ENCODE measurements at regions of chr12 and their contacts with region 1.

Region 1: GRCh38 chr12:110426406-110426805 is 22.9 kb upstream of the ANAPC7 start:
- DNase-seq: no peak
- H3K4me3 ChIP-seq: no peak overlapping the region
- H3K27ac ChIP-seq: peak overlapping the region in 1 of 4 donors; percentile 0
- H3K4me1 ChIP-seq: peaks cover 0 to 8% (median 2%) of the 10 kb centered on the region in 4 donors
- H3K27me3 ChIP-seq: no peaks in the 10 kb centered on the region
- CTCF ChIP-seq: no peak
- EP300 ChIP-seq: no peak
- POLR2A ChIP-seq: no peak

Region 2: DNA sequence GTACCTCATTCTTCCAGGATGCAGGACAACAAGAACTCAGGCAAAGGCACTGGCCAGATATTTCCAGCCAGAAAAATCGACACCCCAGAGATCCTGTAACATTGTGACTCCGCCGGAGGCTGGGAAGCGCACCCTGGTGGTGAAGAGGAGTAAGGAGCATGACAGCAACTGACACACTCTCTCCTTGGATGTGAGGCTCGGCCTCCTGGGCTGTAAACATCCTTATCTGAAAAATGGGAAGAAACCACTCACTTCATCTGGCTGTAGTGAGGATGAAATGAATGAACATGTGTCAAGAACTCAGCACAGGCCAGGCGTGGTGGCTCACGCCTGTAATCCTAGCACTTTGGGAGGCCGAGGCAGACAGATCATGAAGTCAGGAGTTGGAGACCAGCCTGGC is 498.8 kb before region 1 on chr12:
- in situ Hi-C with region 1: no loop called
- intact Hi-C with region 1: no loop called
- DNase-seq: peak; percentile 47
- H3K4me3 ChIP-seq: no peak overlapping the region
- H3K27ac ChIP-seq: no peak overlapping the region
- H3K4me1 ChIP-seq: peaks cover 0 to 9% (median 3%) of the 10 kb centered on the region in 4 donors
- H3K27me3 ChIP-seq: no peaks in the 10 kb centered on the region
- CTCF ChIP-seq: peak; percentile 46 to 66 (median 63)
- EP300 ChIP-seq: no peak
- POLR2A ChIP-seq: no peak

Region 3: GRCh38 chr12:110093631-110094311 is 332.6 kb before region 1 on chr12:
- in situ Hi-C with region 1: loop called in 1 of 4 experiments (anchors 10 kb)
- intact Hi-C with region 1: no loop called
- DNase-seq: no peak
- H3K4me3 ChIP-seq: no peak overlapping the region
- H3K27ac ChIP-seq: no peak overlapping the region
- H3K4me1 ChIP-seq: no peaks in the 10 kb centered on the region
- H3K27me3 ChIP-seq: no peaks in the 10 kb centered on the region
- CTCF ChIP-seq: no peak
- EP300 ChIP-seq: no peak
- POLR2A ChIP-seq: no peak

Region 4: GRCh38 chr12:110501752-110502738 is 75.6 kb after region 1 on chr12 and contains the starts of genes RAD9B and VPS29:
- in situ Hi-C with region 1: no loop called
- intact Hi-C with region 1: no loop called
- DNase-seq: peak; percentile 99
- H3K4me3 ChIP-seq: peak within 1 kb of the TSS; percentile 57 to 89 (median 83)
- H3K27ac ChIP-seq: peak within 1 kb of the TSS; percentile 90 to 98 (median 93)
- H3K4me1 ChIP-seq: peaks cover 18 to 33% (median 25%) of the 10 kb centered on the region in 4 donors
- H3K27me3 ChIP-seq: no peaks in the 10 kb centered on the region
- CTCF ChIP-seq: peak in 1 of 5 experiments; percentile 11
- EP300 ChIP-seq: no peak
- POLR2A ChIP-seq: peak; percentile 97
- total RNA-seq, gene RAD9B: 0.27 to 0.32 TPM in 2 of 4 donors, not detected in the others
- total RNA-seq, gene VPS29: 16.3 to 142 (median 79.3) TPM

Measured in transverse colon (tissue), 4 donors.